ENCODE measurements at regions of chr15 and their contacts with region 1.

Region 1: DNA sequence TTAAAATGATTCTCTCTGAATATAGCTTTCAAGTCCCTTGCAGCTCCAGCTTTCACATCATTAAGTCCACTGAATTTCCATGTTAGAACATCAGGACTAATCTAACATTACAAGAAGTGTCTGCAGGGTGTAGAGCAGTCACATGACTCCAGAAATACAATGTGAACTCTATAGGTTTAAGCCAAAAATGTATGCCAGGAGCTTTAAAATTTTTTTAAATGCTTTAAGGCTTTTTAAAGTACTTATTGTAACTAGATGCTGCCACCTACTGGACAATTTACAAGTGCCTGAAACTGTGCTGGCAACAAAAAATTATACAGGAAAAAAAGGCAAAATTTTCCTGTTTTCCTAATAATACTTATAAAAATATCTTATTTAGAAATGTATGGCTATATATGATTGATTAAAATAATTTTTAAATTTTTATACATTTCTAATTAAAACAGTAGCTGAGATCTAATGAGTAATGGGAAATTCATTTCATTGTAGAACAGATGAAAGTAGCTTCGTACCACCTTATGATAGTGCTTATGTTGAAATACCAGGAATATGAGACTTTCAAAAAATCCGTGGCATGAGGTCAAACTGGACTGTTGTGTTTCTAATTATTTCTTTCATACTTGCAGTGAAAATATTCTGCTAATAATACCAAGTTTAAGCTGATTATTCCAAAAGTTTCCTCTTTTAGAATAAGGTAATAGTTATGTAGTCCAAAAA is 25.7 kb downstream of the FSIP1 start:
- DNase-seq: no peak
- ATAC-seq: no peak

Region 2: DNA sequence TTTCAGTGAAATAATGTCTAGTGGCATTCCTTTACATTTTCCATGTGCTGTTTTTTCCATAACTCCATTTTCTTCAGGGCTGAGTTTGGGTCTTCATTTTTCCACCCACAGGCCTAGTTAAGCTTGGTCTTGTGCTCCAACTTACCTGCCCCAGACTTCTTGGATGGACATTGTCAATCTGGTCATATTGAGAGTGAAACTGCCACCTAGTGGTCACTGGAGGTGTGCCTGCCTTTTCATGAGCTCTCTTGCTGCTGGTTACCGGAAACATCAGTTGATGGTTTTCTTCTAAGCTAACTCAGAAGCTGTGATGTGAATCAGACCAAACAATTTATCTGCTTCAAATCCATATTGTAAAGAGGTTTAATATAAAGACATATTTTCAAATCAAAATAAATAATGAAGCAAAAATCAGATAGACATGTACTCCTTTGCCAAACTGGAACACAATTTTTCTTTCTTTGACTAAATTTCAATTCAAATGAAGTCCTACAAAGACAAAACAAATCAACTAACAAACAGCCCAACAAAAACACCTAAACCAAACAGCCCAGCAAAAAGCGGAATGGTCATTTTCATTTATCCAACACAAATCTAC is 1057.2 kb before region 1 on chr15:
- intact Hi-C with region 1: loop called (anchors 10 kb)
- DNase-seq: peak; percentile 50
- ATAC-seq: no peak

Region 3: GRCh38 chr15:39171944-39172368 is 585.0 kb before region 1 on chr15:
- intact Hi-C with region 1: loop called (anchors 10 kb)
- DNase-seq: no peak
- ATAC-seq: peak; percentile 92

Region 4: GRCh38 chr15:39580117-39580484 is 176.9 kb before region 1 on chr15:
- intact Hi-C with region 1: loop called (anchors 10 kb)
- DNase-seq: peak; percentile 97
- ATAC-seq: peak; percentile 91

Region 5: DNA sequence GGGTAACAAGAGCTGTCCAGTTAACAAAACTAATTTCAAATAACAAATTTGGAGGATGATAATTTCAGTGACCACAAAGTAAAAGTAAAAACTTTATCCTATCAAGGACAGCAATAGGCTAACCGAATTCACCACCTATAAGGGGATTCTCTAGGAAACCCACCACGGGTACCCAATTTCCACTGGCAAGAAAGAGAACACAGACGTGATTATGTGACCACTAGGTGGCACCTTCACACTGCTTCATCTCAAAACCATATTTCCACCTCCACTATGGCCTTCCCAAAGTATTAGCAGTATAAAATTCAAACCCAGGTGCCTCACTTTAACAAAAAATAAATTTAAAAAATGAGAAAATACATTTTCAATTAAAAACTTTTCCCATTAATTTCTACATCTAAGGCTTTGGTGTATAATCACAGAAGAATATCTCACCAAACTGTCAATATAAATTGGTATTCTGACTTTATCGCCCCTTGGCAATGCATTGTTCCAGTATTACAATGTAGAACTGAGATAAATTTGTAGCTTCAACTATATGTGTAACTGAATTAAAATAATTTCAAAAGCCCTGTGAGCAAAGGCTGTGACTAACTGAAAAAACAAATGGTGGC is 70.9 kb before region 1 on chr15:
- intact Hi-C with region 1: loop called (anchors 5 kb)
- DNase-seq: no peak
- ATAC-seq: peak; percentile 62

Region 6: DNA sequence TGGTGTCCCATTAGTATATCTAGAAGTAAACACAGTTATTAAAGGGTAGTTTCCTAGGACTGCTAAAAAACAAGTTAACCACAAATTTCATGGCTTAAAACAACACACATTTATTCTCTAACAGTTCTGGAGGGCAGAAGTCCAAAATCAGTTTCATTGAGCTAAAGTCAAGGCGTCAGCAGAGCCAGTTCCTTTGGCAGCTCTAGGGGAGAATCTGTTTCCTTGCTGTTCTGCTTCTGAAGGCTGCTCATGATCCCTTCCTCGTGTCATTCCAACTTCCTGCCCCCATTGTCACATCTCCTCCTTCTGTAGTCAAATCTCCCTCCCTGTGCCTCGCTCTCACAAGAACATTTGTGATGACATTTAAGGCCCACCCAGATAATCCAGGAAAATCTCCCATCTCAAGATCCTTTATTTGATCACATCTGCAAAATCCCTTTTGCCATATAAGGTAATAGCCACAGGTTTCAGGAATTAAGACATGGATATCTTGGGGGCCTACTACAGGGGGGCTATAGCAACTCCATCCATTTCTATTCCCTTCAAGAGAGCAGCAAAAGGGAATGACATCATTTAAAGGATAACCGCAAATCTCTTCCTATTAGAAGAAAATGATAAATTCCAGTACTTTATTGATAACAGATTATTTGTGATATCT is 113.0 kb after region 1 on chr15:
- intact Hi-C with region 1: no loop called
- DNase-seq: no peak
- ATAC-seq: no peak